ENCODE measurements at regions of chr15 and their contacts with region 1.

Region 1: GRCh38 chr15:66386204-66387123 is at the start of gene MAP2K1:
- DNase-seq: peak; percentile 94 to 99 (median 98)

Region 2: DNA sequence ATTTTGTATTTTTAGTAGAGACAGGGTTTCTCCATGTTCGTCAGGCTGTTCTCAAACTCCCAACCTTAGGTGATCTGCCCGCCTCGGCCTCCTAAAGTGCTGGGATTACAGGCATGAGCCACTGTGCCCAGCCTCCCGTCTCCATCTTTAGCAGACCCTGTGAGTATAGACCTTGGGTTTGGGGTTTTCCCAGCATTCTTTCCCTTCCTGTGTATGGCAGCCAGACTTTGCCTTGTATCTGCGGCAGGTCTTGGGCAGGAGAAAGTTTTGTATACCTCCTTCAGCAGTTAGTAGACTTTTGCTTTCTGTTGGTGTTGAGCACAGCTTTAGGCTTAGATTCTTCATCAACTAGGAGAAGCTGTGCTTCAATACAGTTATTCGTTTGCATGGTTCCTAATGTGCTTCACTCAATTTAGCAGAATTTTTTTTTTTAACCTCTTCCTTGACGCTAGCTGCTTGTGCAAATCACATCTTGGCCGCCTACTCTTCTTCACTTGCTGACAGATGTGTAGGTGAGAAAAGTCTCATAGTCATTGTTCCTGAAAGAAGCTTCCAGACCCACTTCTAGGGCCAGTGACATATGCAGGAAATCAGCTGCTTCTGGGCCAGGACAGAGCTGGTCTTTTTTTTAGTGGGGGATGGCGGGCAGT is 38.6 kb after region 1 on chr15:
- intact Hi-C with region 1: no loop called
- DNase-seq: peak in 26 of 42 donors; percentile 7 to 77 (median 34)

Region 3: GRCh38 chr15:66497502-66498455 is 111.3 kb after region 1 on chr15 and contains the start of gene SNAPC5:
- intact Hi-C with region 1: loop called (anchors 2 kb)
- DNase-seq: peak; percentile 92 to 99 (median 97)

Measured in head of caudate nucleus (tissue), 42 donors.